Activated naive CD4-positive, alpha-beta T cell treated with anti-CD3 and anti-CD28 coated beads for 36 hours (primary cell): ENCODE measurements at regions of chr18 and their contacts with region 1.

Region 1: DNA sequence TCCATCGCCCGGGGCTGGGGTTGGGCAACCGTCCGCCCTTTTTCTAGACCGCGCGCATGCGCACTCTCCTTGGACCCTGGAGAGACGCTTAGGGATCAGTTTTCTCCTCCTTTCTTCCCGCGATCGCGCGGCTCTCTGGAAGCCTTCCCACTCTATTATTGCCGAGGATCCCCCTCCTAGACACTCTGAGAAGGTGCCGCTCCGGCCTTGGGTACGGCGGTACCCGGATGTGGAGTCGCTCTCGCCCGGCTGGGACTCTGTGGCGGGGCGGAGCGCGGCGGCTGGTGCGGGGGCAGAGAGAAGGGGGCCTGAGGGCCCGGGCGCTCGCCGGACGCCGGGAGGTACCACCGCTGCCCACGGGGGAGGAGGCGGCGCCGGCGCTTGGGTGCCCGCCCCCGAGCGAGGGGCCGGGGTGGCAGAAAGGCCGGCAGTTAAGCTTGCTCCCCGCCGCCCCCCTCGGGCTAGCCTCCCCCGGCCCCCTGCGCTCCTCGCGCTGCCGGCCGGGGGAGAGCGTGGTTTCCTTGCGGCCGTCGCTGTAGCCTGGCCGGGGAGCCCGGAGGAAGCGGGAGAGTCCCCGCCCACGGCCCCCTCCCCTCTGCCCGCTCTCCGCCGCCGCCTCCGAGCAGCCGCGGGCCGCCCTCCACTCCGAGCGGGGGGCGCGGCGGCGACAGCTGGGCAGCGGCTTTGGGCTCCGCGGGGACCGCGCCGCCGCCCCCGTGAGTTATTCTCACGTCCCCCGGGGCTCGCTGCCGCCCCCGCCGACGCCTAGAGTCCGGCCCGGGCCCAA is at the start of gene MIB1:
- DNase-seq: no peak
- H3K4me3 Mint-ChIP-seq: peak within 1 kb of the TSS; percentile 86
- H3K27ac Mint-ChIP-seq: peak within 1 kb of the TSS; percentile 88
- H3K4me1 Mint-ChIP-seq: peaks cover 27% of the 10 kb centered on the region
- H3K27me3 Mint-ChIP-seq: peaks cover 2% of the 10 kb centered on the region
- total RNA-seq, gene MIB1: 22.8 to 26.2 TPM

Region 2: DNA sequence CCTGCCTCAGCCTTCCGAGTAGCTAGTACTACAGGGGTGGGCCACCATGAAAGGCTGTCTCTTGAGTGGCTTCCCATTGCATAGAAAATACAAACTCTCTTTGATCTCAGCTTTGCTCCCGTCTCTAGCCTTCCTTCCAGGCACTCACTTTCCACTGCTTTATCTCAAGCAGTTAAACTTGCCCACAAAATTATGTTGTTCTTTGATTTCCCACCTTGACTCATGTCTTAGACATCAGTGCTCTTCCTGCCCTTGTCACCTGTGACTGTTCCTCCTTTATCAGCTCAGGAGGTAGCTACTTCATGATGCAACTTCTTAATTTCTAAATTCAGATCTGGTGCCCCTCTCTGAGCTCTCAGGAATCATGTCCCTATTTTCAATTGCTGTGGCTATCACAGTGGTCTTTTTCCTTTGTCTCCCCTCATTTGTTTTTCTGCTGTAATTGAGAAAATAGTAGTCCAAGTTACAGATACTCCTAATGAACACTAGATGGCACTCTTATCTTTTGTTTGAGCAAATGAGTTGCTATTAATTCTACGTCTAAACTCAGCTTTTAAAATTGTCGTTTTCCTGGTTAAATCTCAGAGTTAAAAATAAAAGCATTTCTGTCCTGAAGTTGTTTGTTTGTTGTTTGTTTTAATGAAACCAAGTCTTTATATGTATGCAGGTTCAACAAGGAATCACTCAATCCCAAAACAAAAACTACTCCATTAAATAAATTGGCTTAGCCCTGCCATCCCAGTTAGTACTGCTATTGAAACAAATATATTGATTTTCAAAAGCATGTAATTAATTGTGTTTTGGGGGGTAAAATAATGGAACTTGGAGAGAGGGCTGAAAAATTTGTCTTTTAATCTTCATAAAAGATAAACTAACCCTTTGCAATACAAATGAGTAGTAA is 545.8 kb before region 1 on chr18:
- CTCF ChIA-PET with region 1: no interaction called
- intact Hi-C with region 1: loop called (anchors 10 kb)
- DNase-seq: no peak
- H3K4me3 Mint-ChIP-seq: no peak overlapping the region
- H3K27ac Mint-ChIP-seq: no peak overlapping the region
- H3K4me1 Mint-ChIP-seq: no peaks in the 10 kb centered on the region
- H3K27me3 Mint-ChIP-seq: peaks cover 22% of the 10 kb centered on the region

Region 3: GRCh38 chr18:21600526-21601410 is 140.1 kb before region 1 on chr18 and contains the start of gene ESCO1:
- CTCF ChIA-PET with region 1: interaction called, 5 read pairs
- intact Hi-C with region 1: loop called (anchors 1 kb)
- DNase-seq: peak; percentile 95
- H3K4me3 Mint-ChIP-seq: peak within 1 kb of the TSS; percentile 92
- H3K27ac Mint-ChIP-seq: peak within 1 kb of the TSS; percentile 96
- H3K4me1 Mint-ChIP-seq: peaks cover 26% of the 10 kb centered on the region
- H3K27me3 Mint-ChIP-seq: no peaks in the 10 kb centered on the region
- total RNA-seq, gene ESCO1: 14.3 to 16.7 TPM

Region 4: DNA sequence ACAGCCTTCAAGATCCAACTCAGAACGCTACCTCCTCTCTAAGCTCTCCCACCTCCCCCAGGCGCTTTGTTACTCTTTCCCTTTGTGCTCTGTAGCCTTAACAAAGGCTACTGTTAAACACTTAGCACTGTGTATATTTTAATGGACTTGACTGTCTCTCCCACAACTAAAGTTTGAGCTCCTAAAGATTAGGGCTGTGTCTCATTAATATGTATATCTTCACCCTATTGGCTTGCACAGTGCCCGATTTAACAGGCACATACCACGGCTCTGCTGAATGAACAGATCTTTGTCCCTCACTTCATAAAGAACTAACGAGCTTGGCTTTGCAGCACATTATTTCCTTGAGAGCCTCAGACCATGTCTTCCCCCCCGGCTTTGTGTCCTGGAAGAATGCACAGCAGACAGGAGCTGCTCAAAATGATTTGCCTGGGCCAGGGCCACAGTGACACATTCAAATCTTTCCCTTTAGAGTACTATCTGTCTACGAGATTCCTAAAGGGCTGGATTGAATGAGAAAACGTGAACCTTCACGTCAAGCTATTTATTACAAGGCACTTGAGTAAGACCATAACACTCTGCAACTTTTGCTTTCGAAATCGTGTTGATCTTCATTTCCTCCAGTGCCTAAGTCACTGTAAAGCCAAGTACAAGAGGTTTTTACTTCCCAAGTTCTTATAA is 58.4 kb before region 1 on chr18:
- CTCF ChIA-PET with region 1: no interaction called
- intact Hi-C with region 1: loop called (anchors 1 kb)
- DNase-seq: peak; percentile 34
- H3K4me3 Mint-ChIP-seq: no peak overlapping the region
- H3K27ac Mint-ChIP-seq: no peak overlapping the region
- H3K4me1 Mint-ChIP-seq: peaks cover 22% of the 10 kb centered on the region
- H3K27me3 Mint-ChIP-seq: no peaks in the 10 kb centered on the region

Region 5: DNA sequence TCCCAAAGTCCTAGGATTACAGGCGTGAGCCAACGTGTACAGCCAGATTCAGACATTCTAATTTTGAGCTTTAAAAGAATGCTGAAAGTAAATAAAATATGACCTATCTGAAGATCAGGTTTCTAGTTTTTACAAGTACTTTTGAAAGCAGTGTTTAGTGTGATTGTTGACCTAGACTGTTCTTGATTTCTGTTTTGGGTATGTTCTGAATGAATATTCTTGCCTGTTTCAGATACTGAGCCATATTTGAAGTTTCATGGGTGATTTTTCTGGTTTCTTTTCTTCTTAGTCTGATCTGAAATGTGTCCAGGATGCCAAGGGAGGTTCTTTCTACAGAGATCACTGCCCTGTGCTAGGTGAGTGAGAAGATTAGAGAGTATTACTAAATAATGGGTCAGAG is 36.9 kb after region 1 on chr18:
- CTCF ChIA-PET with region 1: no interaction called
- intact Hi-C with region 1: no loop called
- DNase-seq: no peak
- H3K4me3 Mint-ChIP-seq: no peak overlapping the region
- H3K27ac Mint-ChIP-seq: no peak overlapping the region
- H3K4me1 Mint-ChIP-seq: no peaks in the 10 kb centered on the region
- H3K27me3 Mint-ChIP-seq: no peaks in the 10 kb centered on the region

Region 6: GRCh38 chr18:21820035-21820810 is 79.3 kb after region 1 on chr18:
- CTCF ChIA-PET with region 1: interaction called, 4 read pairs
- intact Hi-C with region 1: loop called (anchors 5 kb)
- DNase-seq: no peak
- H3K4me3 Mint-ChIP-seq: no peak overlapping the region
- H3K27ac Mint-ChIP-seq: no peak overlapping the region
- H3K4me1 Mint-ChIP-seq: no peaks in the 10 kb centered on the region
- H3K27me3 Mint-ChIP-seq: no peaks in the 10 kb centered on the region

Region 7: DNA sequence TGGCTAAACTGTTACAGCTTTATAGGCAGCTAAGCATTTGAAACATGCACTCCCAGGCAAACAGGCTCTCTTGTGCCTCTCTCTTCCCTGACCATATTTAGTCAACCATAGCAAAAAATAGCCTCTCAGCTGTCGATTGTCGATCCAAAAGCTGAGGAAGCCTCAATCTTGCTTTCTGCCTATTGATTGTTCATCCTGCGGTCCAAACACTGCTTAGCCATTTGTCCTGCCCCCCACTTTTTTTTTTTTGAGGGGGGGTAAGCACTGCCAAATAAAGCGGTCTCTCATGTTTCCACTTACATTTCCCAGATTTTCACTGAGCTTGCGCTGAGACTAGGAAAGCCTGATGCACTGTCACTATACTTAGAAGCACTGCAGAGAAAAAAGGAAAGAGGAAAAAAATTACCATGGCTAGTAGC is 90.5 kb after region 1 on chr18:
- CTCF ChIA-PET with region 1: no interaction called
- intact Hi-C with region 1: no loop called
- DNase-seq: no peak
- H3K4me3 Mint-ChIP-seq: no peak overlapping the region
- H3K27ac Mint-ChIP-seq: no peak overlapping the region
- H3K4me1 Mint-ChIP-seq: no peaks in the 10 kb centered on the region
- H3K27me3 Mint-ChIP-seq: no peaks in the 10 kb centered on the region